Transverse colon (tissue), 4 donors: ENCODE measurements at regions of chr21 and their contacts with region 1.

Region 1: DNA sequence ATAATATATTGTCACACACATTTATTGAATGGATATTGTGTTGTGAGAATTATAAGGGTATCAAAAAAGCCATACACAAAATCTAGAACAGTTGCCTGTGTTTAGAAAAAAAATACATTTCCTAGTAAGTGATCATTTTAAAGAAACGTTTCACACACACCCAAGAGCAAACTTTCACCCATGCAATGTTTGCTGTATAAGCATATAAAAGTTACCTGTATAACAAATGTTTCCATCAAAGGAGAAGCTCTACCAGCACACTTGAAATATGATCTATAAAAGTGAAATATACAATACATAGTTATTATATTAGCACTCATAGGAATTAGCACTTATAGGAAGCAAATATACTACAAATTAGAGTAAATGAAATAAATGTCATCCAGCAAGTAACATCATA is 1098.1 kb downstream of the NCAM2 start:
- DNase-seq: no peak
- H3K4me3 ChIP-seq: no peak overlapping the region
- H3K27ac ChIP-seq: no peak overlapping the region
- H3K4me1 ChIP-seq: peaks cover 0 to 7% (median 0%) of the 10 kb centered on the region in 4 donors
- H3K27me3 ChIP-seq: no peaks in the 10 kb centered on the region
- CTCF ChIP-seq: no peak
- EP300 ChIP-seq: no peak
- POLR2A ChIP-seq: no peak

Region 2: GRCh38 chr21:22120616-22121266 is 24.4 kb after region 1 on chr21:
- in situ Hi-C with region 1: no loop called
- intact Hi-C with region 1: no loop called
- DNase-seq: no peak
- H3K4me3 ChIP-seq: no peak overlapping the region
- H3K27ac ChIP-seq: no peak overlapping the region
- H3K4me1 ChIP-seq: no peaks in the 10 kb centered on the region
- H3K27me3 ChIP-seq: no peaks in the 10 kb centered on the region
- CTCF ChIP-seq: peak in 1 of 5 experiments; percentile 13
- EP300 ChIP-seq: no peak
- POLR2A ChIP-seq: no peak

Region 3: DNA sequence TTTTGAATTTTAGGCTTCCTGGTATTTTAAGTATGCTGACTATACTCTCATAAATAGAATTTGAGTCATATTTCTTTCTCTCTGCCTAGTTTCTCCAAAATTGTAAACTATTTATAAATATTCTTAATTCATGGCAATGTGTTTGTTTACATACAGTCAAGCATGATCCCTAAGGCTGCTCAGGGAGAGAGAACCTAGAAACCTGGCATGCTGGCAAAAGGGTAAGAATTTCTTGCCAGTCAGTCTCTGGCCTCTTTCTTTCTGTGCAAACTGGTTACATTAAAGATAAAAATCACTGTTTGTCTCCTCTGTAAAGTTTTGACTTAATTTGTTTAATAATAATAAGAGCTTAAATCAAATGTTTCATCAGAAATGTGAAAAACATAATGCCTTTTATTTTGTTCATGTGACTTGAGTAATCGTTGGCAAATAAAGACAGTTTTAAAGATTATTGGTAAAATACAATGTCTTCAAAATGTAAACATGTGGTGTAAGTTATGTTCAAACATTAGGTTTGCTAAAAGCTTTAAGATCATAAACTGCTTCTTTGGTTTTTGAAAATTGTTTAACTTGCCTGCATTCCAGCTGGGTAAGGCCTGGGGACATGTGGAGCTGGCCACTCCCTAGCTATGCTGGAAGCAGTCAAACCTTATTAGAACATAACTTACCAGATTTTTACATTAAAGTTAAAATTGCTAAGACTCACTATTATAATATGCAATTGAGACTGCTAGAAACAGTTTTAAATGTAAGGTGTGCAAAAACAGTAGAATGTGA is 303.6 kb after region 1 on chr21:
- in situ Hi-C with region 1: no loop called
- intact Hi-C with region 1: no loop called
- DNase-seq: no peak
- H3K4me3 ChIP-seq: no peak overlapping the region
- H3K27ac ChIP-seq: no peak overlapping the region
- H3K4me1 ChIP-seq: no peaks in the 10 kb centered on the region
- H3K27me3 ChIP-seq: no peaks in the 10 kb centered on the region
- CTCF ChIP-seq: no peak
- EP300 ChIP-seq: no peak
- POLR2A ChIP-seq: no peak

Region 4: DNA sequence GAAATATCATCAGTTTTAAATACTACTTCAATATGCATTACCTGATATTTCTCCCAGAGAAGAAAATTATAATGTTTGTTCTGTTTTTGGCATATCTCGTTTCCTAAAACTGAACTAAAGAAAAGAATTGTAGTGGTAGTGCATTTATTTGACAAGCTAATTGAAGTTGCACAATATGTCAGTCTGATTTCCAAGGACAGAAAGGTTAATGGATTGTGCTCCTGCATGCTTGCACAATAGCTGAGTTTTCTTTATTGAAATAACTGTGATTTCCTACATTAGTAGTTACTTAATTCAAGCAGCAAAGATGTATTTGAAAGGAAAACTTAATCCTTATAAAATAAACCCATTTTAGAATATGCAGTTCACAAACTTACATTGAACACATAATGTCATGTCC is 949.6 kb after region 1 on chr21:
- in situ Hi-C with region 1: no loop called
- intact Hi-C with region 1: loop called (anchors 10 kb)
- DNase-seq: no peak
- H3K4me3 ChIP-seq: no peak overlapping the region
- H3K27ac ChIP-seq: no peak overlapping the region
- H3K4me1 ChIP-seq: no peaks in the 10 kb centered on the region
- H3K27me3 ChIP-seq: no peaks in the 10 kb centered on the region
- CTCF ChIP-seq: no peak
- EP300 ChIP-seq: no peak
- POLR2A ChIP-seq: no peak